Uterus (tissue), 4 donors: ENCODE measurements at regions of chr1 and their contacts with region 1.

Region 1: DNA sequence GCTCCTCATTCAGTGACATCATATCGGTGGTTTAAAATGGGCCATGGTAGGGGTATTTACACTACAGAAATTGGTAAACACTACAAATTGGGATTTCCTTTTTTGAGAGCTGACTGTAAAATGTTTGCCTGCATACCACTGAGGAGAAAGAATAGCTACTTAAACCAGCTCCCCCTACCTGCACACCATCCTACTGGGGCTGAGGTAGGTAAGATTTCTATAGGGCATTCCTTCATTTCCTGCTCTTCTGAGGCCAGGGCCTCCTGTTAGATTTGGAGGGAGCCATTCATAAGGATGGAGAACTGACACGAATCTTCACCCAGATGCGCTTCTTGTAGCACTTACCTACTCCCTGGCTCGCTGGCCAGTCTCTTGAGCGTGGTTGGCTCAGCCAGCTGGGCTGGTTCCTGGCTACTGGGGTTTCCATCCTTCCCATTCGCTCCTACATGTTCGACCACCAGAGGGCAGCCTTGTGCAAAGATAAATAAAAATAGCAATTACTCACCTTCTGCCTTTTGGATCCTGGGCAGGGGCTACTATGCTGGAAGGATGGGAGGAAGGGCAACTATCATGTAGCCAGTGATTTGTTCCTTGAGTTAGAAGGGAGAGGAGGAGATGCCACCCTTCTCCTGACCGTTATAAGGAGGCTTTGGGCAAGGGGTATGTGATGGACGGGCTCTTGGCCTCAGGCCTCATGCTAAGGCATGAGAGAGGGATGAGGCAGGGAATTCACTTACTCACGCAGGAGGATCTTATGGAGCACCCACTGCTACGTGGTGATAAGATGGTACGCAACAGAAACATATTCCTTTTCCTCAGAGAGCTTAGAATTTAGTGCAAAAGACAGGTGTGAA is 10.7 kb downstream of the OPTC start:
- DNase-seq: peak; percentile 87 to 92
- H3K4me3 ChIP-seq: no peak overlapping the region
- H3K27ac ChIP-seq: peak overlapping the region; percentile 83 to 85
- H3K4me1 ChIP-seq: peaks cover 0 to 16% of the 10 kb centered on the region in 2 donors
- H3K27me3 ChIP-seq: no peaks in the 10 kb centered on the region
- CTCF ChIP-seq: peak; percentile 82 to 90 (median 86)
- POLR2A ChIP-seq: no peak

Region 2: GRCh38 chr1:203702130-203702577 is 197.5 kb after region 1 on chr1:
- intact Hi-C with region 1: loop called (anchors 2 kb)
- DNase-seq: peak; percentile 64 to 70
- H3K4me3 ChIP-seq: no peak overlapping the region
- H3K27ac ChIP-seq: peak overlapping the region; percentile 92 to 97
- H3K4me1 ChIP-seq: peaks cover 7 to 9% of the 10 kb centered on the region in 2 donors
- H3K27me3 ChIP-seq: no peaks in the 10 kb centered on the region
- CTCF ChIP-seq: peak; percentile 71 to 95 (median 87)
- POLR2A ChIP-seq: no peak